ENCODE measurements at regions of chr15 and their contacts with region 1.

Region 1: GRCh38 chr15:78308422-78309032 is 9.1 kb upstream of the SKIC8 start:
- DNase-seq: peak; percentile 85

Region 2: GRCh38 chr15:78195735-78196201 is 112.8 kb before region 1 on chr15:
- in situ Hi-C with region 1: no loop called
- DNase-seq: peak; percentile 89

Region 3: DNA sequence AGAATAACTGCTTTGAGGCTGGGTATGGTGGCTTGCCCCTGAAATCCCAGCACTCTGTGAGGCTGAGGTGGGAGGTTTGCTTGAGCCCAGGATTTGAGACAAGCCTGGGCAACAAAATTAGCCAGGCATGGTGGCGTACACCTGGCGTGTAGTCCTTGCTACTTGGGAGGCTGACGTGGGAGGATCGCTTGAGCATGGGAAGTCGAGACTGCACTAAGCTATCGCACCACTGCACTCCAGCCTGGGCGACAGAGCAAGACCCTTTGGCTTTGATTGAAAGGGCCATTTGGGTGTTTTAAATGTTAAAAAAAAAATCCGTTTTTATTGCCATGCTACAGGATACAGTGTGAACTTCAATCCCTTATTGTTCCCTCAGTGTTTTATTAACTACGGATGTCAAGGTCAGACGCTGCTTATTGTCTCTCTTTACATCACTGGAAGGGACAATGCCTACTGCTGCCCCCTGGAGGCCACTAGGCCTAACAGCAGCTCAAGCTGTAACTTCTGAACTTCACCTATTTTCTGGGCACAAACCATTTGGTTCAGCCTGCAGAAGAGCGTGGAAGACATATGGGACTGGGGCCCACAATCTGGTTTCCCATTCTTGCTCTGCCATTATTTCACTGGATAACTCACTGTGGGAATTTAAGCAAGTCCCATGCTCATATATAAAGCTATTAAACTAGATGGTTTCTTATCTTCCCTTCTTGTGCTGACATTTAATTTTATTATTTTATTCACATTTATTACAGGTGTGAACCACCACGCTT is 114.2 kb after region 1 on chr15:
- in situ Hi-C with region 1: loop called (anchors 25 kb)
- DNase-seq: peak; percentile 90

Region 4: GRCh38 chr15:78509726-78510312 is 201.3 kb after region 1 on chr15:
- in situ Hi-C with region 1: no loop called
- DNase-seq: no peak

Region 5: GRCh38 chr15:78618490-78618934 is 310.0 kb after region 1 on chr15:
- in situ Hi-C with region 1: no loop called
- DNase-seq: peak; percentile 96

Measured in KBM-7 (cell line).